CD4-positive, alpha-beta memory T cell (primary cell): ENCODE measurements at regions of chrX and their contacts with region 1.

Region 1: GRCh38 chrX:41350976-41351569 is 17.1 kb downstream of the DDX3X start:
- DNase-seq: peak in 1 of 5 donors; percentile 22
- H3K4me3 ChIP-seq: no peak overlapping the region
- H3K4me3 Mint-ChIP-seq: peak overlapping the region in 3 of 8 donors; percentile 24 to 44 (median 31)
- H3K27ac ChIP-seq: no peak overlapping the region
- H3K27ac Mint-ChIP-seq: peak overlapping the region; percentile 8 to 84 (median 47)
- H3K4me1 ChIP-seq: peaks cover 23% of the 10 kb centered on the region
- H3K4me1 Mint-ChIP-seq: peaks cover 23 to 52% (median 42%) of the 10 kb centered on the region in 4 donors
- H3K27me3 ChIP-seq: no peaks in the 10 kb centered on the region
- H3K27me3 Mint-ChIP-seq: no peaks in the 10 kb centered on the region

Region 2: DNA sequence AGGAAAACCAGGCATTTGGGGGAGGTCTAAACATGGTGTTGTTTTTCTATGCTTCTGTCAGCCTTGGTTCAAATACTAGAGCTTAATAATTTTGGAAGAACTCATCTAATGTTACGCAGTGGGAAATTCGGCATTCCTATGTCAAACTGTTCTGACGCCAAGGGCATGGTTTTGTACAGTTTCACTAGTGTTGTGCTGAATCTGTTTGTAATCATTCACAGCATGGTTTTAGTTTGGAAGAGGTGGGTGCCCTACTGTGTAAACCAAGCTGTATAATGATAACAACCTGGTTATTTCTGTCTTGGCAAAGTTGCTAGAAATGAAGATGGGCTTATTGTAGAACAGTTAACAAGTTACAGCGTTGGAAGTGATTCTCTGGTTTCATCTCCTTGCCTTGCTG is 11.9 kb before region 1 on chrX:
- CTCF ChIA-PET with region 1: interaction called, 4 read pairs
- POLR2A ChIA-PET with region 1: interaction called, 16 read pairs
- intact Hi-C with region 1: loop called (anchors 1 kb)
- DNase-seq: no peak
- H3K4me3 ChIP-seq: no peak overlapping the region
- H3K4me3 Mint-ChIP-seq: peak overlapping the region; percentile 59 to 99 (median 84)
- H3K27ac ChIP-seq: peak overlapping the region; percentile 38
- H3K27ac Mint-ChIP-seq: peak overlapping the region in 4 of 7 donors; percentile 27 to 100 (median 76)
- H3K4me1 ChIP-seq: peaks cover 53% of the 10 kb centered on the region
- H3K4me1 Mint-ChIP-seq: peaks cover 22 to 72% (median 61%) of the 10 kb centered on the region in 4 donors
- H3K27me3 ChIP-seq: no peaks in the 10 kb centered on the region
- H3K27me3 Mint-ChIP-seq: no peaks in the 10 kb centered on the region

Region 3: GRCh38 chrX:41384041-41384705 is 33.1 kb after region 1 on chrX:
- CTCF ChIA-PET with region 1: interaction called, 4 read pairs
- POLR2A ChIA-PET with region 1: interaction called, 22 read pairs
- intact Hi-C with region 1: no loop called
- DNase-seq: peak; percentile 33 to 79 (median 53)
- H3K4me3 ChIP-seq: no peak overlapping the region
- H3K4me3 Mint-ChIP-seq: peak overlapping the region; percentile 53 to 92 (median 80)
- H3K27ac ChIP-seq: no peak overlapping the region
- H3K27ac Mint-ChIP-seq: peak overlapping the region; percentile 58 to 97 (median 94)
- H3K4me1 ChIP-seq: peaks cover 21% of the 10 kb centered on the region
- H3K4me1 Mint-ChIP-seq: peaks cover 12 to 21% (median 15%) of the 10 kb centered on the region in 4 donors
- H3K27me3 ChIP-seq: no peaks in the 10 kb centered on the region
- H3K27me3 Mint-ChIP-seq: no peaks in the 10 kb centered on the region

Region 4: DNA sequence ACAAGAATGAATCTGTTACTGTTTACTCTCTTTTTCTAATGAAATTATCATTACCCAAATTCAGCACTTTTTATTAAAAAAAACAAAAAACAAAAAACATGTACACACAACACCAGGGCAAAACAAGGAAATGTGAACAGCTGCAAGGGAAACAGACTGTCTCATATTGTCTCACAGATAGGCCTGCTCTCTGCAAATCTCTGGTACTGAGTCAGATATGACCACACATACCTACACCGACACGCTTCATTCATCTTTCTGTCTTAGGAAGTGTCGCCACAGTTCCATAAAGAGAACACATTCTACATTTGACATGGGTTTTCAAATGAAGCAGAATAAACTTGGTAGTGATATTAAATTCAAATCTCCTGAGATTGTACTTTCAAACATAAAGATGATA is 245.5 kb after region 1 on chrX:
- CTCF ChIA-PET with region 1: no interaction called
- POLR2A ChIA-PET with region 1: no interaction called
- intact Hi-C with region 1: no loop called
- DNase-seq: no peak
- H3K4me3 ChIP-seq: no peak overlapping the region
- H3K4me3 Mint-ChIP-seq: no peak overlapping the region
- H3K27ac ChIP-seq: no peak overlapping the region
- H3K27ac Mint-ChIP-seq: peak overlapping the region in 3 of 7 donors; percentile 6 to 27 (median 8)
- H3K4me1 ChIP-seq: no peaks in the 10 kb centered on the region
- H3K4me1 Mint-ChIP-seq: peaks cover 3 to 11% (median 6%) of the 10 kb centered on the region in 4 donors
- H3K27me3 ChIP-seq: no peaks in the 10 kb centered on the region
- H3K27me3 Mint-ChIP-seq: no peaks in the 10 kb centered on the region